ENCODE measurements at regions of chr7 and their contacts with region 1.

Region 1: DNA sequence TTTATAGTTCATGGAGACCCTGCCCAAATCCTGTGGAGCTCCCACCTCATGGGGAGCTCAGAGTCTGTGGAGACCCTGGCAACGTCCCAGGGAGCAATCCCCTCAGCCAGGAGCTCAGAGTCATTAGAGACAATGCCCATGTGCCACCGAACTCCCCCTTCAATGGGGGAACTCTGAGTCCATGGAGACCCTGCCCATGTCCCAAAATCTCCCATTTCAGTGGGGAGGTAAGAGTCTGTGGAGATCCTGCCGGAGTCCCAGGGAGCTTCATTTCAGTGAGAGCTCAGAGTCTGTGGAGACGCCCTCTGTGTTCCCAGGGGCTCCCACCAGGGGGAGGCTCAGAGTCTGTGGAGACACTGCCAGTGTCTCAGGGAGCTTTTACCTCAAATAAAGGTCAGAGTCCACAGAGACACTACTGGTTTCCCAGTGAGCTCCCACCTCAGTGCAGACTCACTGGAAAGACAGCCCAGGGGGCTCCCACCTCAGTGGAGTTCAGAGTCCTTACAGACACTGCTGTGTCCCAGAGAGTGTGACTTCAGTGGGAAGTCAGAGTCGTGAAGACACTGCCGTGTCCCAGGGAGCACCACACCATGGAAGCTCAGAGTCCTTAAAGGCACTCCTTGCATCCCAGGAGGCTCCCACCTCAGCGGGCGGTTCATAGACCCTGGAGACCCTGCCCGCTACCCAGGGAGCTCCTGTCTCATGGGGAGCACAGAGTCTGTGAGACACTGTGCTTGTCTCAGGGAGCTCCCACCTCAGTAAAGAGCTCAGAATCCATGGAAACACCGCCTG is 5.0 kb downstream of the MYO1G start:
- DNase-seq: peak; percentile 67
- H3K4me3 Mint-ChIP-seq: no peak overlapping the region
- H3K27ac Mint-ChIP-seq: peak overlapping the region; percentile 76
- H3K4me1 Mint-ChIP-seq: peaks cover 33% of the 10 kb centered on the region
- H3K27me3 Mint-ChIP-seq: no peaks in the 10 kb centered on the region

Region 2: GRCh38 chr7:44955733-44956132 is 18.1 kb before region 1 on chr7:
- CTCF ChIA-PET with region 1: interaction called, 4 read pairs
- POLR2A ChIA-PET with region 1: interaction called, 56 read pairs
- intact Hi-C with region 1: no loop called
- DNase-seq: no peak
- H3K4me3 Mint-ChIP-seq: no peak overlapping the region
- H3K27ac Mint-ChIP-seq: no peak overlapping the region
- H3K4me1 Mint-ChIP-seq: peaks cover 21% of the 10 kb centered on the region
- H3K27me3 Mint-ChIP-seq: no peaks in the 10 kb centered on the region

Region 3: GRCh38 chr7:44986218-44987053 is 12.6 kb after region 1 on chr7:
- CTCF ChIA-PET with region 1: interaction called, 7 read pairs
- POLR2A ChIA-PET with region 1: interaction called, 83 read pairs
- intact Hi-C with region 1: loop called (anchors 1 kb)
- DNase-seq: peak; percentile 97
- H3K4me3 Mint-ChIP-seq: peak overlapping the region; percentile 99
- H3K27ac Mint-ChIP-seq: peak overlapping the region; percentile 100
- H3K4me1 Mint-ChIP-seq: peaks cover 59% of the 10 kb centered on the region
- H3K27me3 Mint-ChIP-seq: no peaks in the 10 kb centered on the region

Region 4: GRCh38 chr7:45033261-45033930 is 59.6 kb after region 1 on chr7:
- CTCF ChIA-PET with region 1: interaction called, 18 read pairs
- POLR2A ChIA-PET with region 1: interaction called, 17 read pairs
- intact Hi-C with region 1: no loop called
- DNase-seq: peak; percentile 47
- H3K4me3 Mint-ChIP-seq: peak overlapping the region; percentile 6
- H3K27ac Mint-ChIP-seq: peak overlapping the region; percentile 83
- H3K4me1 Mint-ChIP-seq: peaks cover 85% of the 10 kb centered on the region
- H3K27me3 Mint-ChIP-seq: no peaks in the 10 kb centered on the region

Region 5: DNA sequence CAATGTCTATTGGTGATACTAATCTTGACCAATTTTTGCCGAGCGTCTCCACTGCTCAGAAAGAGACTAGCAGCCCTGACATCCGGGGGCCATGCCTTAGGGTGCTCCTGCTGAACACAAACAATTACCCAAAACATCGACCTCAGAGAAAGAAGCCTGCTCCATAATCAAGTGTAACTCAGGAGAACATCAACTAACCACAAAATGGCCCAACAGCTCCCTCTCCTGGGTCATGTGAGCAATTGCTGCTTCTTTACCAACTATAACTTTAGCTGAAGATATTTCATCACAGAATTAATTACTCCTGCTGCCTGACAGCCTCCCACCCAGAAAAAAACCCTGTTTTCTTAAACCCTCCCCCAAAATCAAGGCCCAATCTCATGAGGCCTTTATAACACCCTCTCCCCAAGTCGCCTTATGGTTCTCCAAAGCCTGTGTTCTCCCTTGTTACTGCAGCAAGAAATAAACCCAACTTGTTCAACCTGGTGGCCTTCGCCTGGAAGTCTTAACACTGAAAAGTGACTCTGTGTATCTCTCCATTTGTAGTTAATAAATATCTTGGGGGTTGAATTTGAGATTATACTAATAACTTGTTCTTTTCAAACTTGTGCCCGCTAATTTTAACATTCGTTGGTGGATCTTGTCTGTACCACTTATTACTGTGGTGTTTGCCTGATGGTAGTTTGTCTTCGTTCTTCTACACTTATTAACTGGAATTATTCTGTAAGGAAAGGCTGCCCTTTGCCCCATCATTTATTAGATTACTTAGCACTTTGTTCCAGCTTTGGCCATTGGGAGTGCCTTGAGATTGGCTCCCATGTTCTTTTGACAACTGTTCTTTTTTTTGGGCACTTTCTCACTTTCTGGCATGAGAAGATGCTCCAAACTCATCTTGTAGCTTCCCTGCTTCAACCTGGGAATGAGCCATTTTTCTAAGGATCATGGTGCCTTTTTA is 162.6 kb after region 1 on chr7:
- CTCF ChIA-PET with region 1: interaction called, 112 read pairs
- POLR2A ChIA-PET with region 1: interaction called, 10 read pairs
- intact Hi-C with region 1: no loop called
- DNase-seq: peak; percentile 81
- H3K4me3 Mint-ChIP-seq: no peak overlapping the region
- H3K27ac Mint-ChIP-seq: peak overlapping the region; percentile 9
- H3K4me1 Mint-ChIP-seq: peaks cover 9% of the 10 kb centered on the region
- H3K27me3 Mint-ChIP-seq: peaks cover 1% of the 10 kb centered on the region

Measured in activated CD4-positive, alpha-beta memory T cell treated with anti-CD3 and anti-CD28 coated beads for 36 hours (primary cell).